ENCODE measurements at regions of chr7 and their contacts with region 1.

Region 1: DNA sequence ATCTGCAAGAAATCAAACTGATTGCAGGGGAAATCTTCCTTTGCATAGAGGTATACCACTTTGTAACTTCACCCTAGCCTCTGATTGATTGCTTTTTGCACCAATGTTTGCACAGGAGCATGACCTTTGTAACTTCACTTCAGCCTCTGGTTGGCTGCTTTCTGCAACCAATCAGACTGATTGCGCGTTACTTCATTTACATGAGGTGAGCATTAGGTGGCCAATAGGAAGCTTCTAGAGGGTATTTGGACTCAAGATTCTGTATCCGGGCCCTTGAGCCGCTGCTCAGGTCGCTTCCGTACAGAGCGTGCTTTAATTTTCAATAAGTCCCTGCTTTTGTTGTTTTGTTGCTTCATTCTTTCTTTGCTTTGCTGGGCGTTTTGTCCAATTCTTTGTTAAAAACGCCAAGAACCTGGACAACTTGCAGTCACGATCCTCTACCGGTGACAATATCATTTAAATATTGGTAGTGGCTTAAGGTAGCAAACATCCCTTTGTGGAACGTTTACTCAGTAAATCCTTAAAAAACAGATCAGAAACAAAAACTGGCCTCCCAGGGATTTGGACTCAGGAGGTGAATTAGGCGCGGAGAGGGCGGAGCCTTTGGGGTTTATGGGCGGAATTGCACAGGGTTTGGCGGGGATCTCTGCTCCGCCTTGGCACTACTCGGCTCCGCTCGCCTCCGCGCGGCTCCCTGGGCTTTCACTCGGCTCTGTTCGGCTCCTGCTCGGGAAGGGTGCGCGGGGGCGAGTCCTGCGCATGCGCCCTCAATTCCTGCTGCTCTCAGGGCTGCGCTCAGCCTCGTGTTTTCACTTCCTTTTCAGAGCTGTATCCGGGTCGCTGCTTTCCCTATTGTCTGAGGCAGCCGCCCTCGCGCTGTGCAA is at the start of gene PHF14:
- DNase-seq: peak; percentile 98
- H3K4me3 ChIP-seq: peak within 1 kb of the TSS; percentile 80 to 96 (median 86)
- H3K27ac ChIP-seq: peak within 1 kb of the TSS; percentile 80 to 91 (median 85)
- H3K4me1 ChIP-seq: peaks cover 0 to 23% (median 13%) of the 10 kb centered on the region in 4 donors
- H3K27me3 ChIP-seq: no peaks in the 10 kb centered on the region
- CTCF ChIP-seq: no peak
- EP300 ChIP-seq: no peak
- POLR2A ChIP-seq: peak; percentile 12 to 52
- total RNA-seq, gene PHF14: 28.8 to 47.6 (median 35.2) TPM

Region 2: GRCh38 chr7:10924366-10924765 is 48.9 kb before region 1 on chr7:
- intact Hi-C with region 1: loop called (anchors 10 kb)
- DNase-seq: no peak
- H3K4me3 ChIP-seq: no peak overlapping the region
- H3K27ac ChIP-seq: no peak overlapping the region
- H3K4me1 ChIP-seq: no peaks in the 10 kb centered on the region
- H3K27me3 ChIP-seq: no peaks in the 10 kb centered on the region
- CTCF ChIP-seq: no peak
- EP300 ChIP-seq: no peak
- POLR2A ChIP-seq: no peak

Region 3: GRCh38 chr7:10939911-10940703 is 33.2 kb before region 1 on chr7:
- intact Hi-C with region 1: loop called (anchors 1 kb)
- DNase-seq: peak; percentile 96
- H3K4me3 ChIP-seq: peak overlapping the region; percentile 62 to 78 (median 74)
- H3K27ac ChIP-seq: peak overlapping the region; percentile 85 to 93 (median 90)
- H3K4me1 ChIP-seq: peaks cover 0 to 47% (median 35%) of the 10 kb centered on the region in 4 donors
- H3K27me3 ChIP-seq: no peaks in the 10 kb centered on the region
- CTCF ChIP-seq: no peak
- EP300 ChIP-seq: no peak
- POLR2A ChIP-seq: peak; percentile 89 to 94

Region 4: DNA sequence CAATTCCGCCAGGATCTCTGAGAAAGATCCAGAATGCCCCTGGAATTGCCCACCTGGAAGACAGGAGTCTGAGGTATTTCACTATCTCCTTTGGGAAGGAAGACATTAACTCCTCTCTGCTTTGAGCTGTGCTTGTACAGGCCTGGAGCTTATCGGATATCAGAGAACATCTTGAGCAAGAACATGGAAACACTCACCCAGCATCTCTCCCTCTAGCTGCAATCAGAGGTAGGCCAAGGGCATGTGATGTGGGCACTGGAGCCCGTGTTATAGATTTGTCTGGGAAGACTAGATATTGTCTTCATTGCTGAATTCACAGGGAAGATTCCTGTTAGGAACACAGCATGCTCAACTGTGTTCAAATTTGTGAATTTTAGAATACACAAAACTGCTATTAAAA is 234.3 kb after region 1 on chr7:
- intact Hi-C with region 1: no loop called
- DNase-seq: no peak
- H3K4me3 ChIP-seq: no peak overlapping the region
- H3K27ac ChIP-seq: no peak overlapping the region
- H3K4me1 ChIP-seq: peaks cover 0 to 11% (median 0%) of the 10 kb centered on the region in 4 donors
- H3K27me3 ChIP-seq: no peaks in the 10 kb centered on the region
- CTCF ChIP-seq: no peak
- EP300 ChIP-seq: no peak
- POLR2A ChIP-seq: no peak